Activated naive CD4-positive, alpha-beta T cell treated with anti-CD3 and anti-CD28 coated beads, Interleukin-2, amount 10 ng/mL, durations not matched to agents 7 days and 5 days (primary cell): ENCODE measurements at regions of chr6 and their contacts with region 1.

Region 1: DNA sequence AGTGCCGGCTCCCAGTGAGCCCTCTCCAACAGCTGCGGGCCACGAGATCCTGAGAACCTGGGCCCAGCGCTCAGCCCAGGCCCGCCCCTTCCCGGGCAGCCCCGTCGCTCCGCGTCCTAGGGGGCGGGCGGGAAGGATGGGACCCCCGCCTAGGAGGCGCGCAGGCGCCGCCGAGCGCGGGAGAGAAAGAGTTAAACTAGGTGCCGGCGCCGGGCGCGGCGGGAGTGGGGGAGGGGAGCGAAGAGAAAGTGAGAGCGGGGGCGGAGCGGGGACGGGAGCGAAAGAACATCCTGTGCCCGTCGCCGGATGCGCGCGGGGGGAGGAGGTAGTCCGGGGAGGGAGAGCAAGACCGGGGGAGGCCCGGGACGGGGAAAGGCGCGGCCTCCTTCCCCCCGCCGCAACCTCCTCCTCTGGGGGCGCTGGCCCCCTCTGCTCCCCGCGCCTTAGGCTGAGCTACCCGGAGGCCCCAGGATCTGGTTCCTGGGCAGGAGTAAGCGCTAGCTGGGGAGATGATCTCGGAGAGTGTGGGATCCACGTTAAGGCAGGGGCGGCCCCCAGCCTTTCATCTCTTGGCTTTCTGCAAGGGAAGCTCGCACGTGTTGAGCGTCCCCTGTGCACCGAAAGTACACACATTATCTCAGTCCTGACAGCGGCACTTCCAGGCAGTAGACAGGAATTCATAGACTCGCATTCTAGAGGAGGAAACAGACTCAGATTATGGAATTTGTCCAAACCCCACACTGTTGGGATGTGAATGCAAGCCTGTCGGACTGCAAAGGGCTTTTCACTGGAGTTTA is 4.9 kb upstream of the ARMC12 start:
- DNase-seq: peak; percentile 98
- H3K4me3 Mint-ChIP-seq: peak overlapping the region; percentile 82
- H3K27ac Mint-ChIP-seq: peak overlapping the region; percentile 99
- H3K4me1 Mint-ChIP-seq: peaks cover 81% of the 10 kb centered on the region
- H3K27me3 Mint-ChIP-seq: no peaks in the 10 kb centered on the region

Region 2: GRCh38 chr6:35552285-35552917 is 179.5 kb before region 1 on chr6:
- CTCF ChIA-PET with region 1: interaction called, 12 read pairs
- DNase-seq: peak; percentile 80
- H3K4me3 Mint-ChIP-seq: no peak overlapping the region
- H3K27ac Mint-ChIP-seq: no peak overlapping the region
- H3K4me1 Mint-ChIP-seq: no peaks in the 10 kb centered on the region
- H3K27me3 Mint-ChIP-seq: peaks cover 50% of the 10 kb centered on the region

Region 3: DNA sequence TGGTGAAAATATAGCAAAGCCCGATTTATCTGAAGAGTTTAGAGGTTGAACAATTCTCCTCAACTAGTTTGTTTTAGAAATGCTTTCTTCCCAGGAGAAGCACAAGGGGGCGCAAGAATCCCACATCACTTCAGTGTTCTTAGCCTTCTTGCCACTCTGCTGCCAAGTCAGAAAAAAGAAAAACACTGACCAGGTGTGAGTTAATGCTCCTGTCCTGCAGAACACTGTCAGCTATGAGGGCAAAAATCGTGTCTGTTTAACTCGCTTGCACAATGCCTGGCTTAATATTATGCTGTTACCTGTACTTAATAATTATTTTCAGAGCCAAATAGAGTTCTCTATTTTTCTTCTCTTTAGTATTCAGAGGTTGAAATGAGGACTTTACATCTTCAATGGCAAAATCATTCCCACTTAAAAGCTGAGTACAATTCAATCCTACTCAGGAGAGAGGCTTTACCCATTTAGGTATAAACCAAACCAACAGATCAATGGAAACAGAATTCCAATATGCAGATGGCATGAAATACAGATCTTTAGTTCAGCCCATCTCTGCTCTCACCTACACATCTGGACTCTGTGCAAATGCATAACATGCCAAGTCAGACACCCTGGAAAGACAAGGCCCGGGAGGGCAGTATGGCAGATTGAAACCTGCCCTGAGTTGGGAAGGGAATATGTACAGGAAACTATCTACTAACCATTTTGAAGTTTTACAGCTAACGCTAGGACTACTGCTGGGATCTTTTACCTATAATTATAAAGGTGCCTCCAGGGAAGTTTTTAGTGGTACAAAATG is 147.8 kb before region 1 on chr6:
- CTCF ChIA-PET with region 1: interaction called, 169 read pairs
- DNase-seq: peak; percentile 85
- H3K4me3 Mint-ChIP-seq: no peak overlapping the region
- H3K27ac Mint-ChIP-seq: peak overlapping the region; percentile 78
- H3K4me1 Mint-ChIP-seq: peaks cover 47% of the 10 kb centered on the region
- H3K27me3 Mint-ChIP-seq: no peaks in the 10 kb centered on the region

Region 4: DNA sequence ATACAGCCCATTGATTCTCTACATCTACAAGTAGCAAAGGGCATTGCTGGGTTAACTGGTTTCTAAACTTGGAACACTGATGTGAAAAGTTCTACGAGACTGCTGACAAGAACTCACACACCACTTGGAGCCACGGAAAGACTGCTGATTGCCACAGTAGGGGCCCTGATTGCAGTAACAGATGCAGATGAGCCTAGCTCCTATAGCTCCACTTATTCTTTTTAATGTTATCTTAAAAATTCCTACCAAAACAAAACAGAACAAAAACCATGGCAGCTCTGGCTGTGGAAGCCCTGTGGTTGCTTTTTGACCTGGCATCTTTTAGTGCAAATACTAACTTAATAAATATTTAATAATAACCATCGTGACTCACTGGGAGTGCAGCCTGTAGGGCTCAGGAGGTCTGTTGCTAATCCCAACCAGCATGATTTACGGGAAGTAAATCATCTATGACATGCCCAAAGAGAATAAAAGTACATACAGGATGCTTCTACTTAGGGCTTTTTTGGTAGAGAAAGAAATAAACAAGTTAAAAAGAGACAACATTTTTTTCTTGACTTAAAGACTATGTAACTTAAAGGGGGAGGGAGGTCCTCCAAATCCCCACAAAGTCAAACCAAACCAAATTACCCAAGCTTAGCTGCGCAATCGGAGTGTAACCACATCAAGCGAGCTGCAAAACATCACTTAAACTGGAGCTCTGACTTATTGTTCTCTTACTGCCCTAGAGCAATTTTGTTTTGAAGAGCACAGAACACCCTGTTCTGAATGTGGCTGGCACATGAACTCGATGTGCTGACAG is 130.4 kb before region 1 on chr6:
- CTCF ChIA-PET with region 1: interaction called, 25 read pairs
- DNase-seq: peak; percentile 81
- H3K4me3 Mint-ChIP-seq: peak overlapping the region; percentile 77
- H3K27ac Mint-ChIP-seq: peak overlapping the region; percentile 99
- H3K4me1 Mint-ChIP-seq: peaks cover 77% of the 10 kb centered on the region
- H3K27me3 Mint-ChIP-seq: no peaks in the 10 kb centered on the region

Region 5: DNA sequence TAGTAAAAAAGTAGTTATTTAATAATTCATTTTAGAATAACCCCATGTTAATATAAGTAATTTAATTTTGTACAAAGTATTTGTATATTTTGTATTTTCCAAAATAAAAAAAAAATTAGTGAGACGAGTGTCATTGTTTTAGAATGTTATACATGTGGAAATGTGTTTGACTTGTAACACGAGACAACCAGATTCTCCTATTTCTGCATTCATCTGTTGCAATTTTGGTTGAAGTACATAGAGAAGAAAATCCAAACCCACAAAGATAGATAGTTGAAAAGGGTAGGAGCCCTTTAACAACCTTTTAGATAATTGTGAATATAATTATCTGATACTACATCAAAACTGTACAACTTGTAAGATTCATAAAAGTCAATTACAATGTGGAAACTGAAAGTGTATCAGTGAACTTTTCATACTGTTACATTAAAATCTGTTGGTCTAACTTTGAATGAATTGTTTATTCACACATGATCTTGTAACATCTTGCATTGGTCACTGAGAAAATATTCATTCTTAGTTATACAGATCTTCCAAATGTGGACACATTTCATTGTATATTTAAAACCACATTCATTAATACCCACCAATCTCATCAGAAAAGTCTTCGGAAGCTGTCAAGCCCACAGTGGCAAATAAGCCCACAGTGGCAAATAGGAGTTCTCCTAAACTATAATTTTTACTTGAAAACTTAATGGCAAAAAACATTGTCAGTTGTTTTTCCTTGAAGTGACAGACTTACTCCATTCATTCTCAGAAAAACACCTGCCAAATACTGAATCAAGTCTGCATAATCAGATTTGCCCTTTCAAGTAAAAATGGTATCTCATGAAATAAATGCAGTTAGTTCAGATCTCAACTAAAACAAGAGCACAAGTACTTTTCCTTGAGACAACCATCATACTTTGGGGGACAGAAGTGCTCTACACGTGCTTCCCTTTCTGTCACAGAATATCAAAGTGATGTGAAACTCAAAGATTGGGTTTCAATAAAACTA is 96.0 kb before region 1 on chr6:
- CTCF ChIA-PET with region 1: interaction called, 14 read pairs
- DNase-seq: no peak
- H3K4me3 Mint-ChIP-seq: no peak overlapping the region
- H3K27ac Mint-ChIP-seq: peak overlapping the region; percentile 16
- H3K4me1 Mint-ChIP-seq: peaks cover 50% of the 10 kb centered on the region
- H3K27me3 Mint-ChIP-seq: no peaks in the 10 kb centered on the region

Region 6: DNA sequence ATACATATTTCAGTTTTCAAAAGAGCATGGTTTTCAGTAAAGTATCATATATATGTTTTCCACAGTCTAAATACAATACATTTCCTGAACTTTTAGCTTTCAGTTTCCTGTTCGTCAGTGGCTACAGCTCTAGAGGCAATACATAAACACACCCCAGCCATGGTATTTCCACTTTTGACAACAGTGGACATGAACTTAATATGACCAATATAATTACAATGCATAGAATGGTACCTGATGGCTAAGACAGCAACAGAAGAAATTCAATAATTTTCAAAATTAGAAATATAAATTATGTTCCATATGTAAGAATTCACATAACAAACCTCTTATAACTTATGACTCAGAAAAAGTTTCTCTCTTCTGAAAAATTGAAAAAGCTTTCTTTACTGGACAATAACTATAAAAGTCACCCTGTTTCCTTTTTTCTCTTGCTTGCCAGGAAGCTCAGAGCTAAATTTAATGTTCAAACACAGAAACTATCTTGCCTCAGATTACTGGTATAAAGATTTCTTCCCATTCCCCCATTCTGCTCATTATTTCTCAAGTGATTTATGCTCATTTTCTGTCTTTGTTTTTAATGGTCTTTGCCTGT is 62.4 kb before region 1 on chr6:
- CTCF ChIA-PET with region 1: interaction called, 25 read pairs
- DNase-seq: no peak
- H3K4me3 Mint-ChIP-seq: peak overlapping the region; percentile 66
- H3K27ac Mint-ChIP-seq: peak overlapping the region; percentile 95
- H3K4me1 Mint-ChIP-seq: peaks cover 70% of the 10 kb centered on the region
- H3K27me3 Mint-ChIP-seq: no peaks in the 10 kb centered on the region

Region 7: DNA sequence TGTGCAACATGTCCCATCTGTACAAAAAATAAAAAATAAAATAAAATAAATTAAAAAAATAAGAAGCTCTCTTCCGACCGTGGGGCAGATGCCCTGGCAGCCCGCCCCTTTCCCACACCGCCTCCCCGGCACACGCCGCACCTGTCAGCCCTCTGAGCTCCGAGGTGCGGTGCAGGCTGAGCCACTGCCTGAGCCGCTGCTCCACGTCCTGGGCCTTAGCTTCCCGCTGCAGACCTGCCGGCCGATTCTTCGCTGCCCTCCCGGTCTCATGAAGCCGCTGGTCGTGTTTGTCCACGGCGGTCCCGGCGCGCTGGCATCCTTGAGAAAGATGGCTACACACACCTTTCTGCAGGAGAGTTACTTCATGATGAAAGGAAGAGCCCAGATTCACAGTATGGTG is 33.8 kb after region 1 on chr6:
- CTCF ChIA-PET with region 1: no interaction called
- DNase-seq: no peak
- H3K4me3 Mint-ChIP-seq: no peak overlapping the region
- H3K27ac Mint-ChIP-seq: no peak overlapping the region
- H3K4me1 Mint-ChIP-seq: no peaks in the 10 kb centered on the region
- H3K27me3 Mint-ChIP-seq: peaks cover 67% of the 10 kb centered on the region

Region 8: GRCh38 chr6:35955976-35956375 is 224.0 kb after region 1 on chr6:
- CTCF ChIA-PET with region 1: interaction called, 19 read pairs
- DNase-seq: peak; percentile 30
- H3K4me3 Mint-ChIP-seq: no peak overlapping the region
- H3K27ac Mint-ChIP-seq: no peak overlapping the region
- H3K4me1 Mint-ChIP-seq: peaks cover 4% of the 10 kb centered on the region
- H3K27me3 Mint-ChIP-seq: peaks cover 31% of the 10 kb centered on the region